ENCODE measurements at regions of chr12 and their contacts with region 1.

Region 1: GRCh38 chr12:104108755-104109445 is 29.1 kb downstream of the NFYB start:
- DNase-seq: peak; percentile 81

Region 2: DNA sequence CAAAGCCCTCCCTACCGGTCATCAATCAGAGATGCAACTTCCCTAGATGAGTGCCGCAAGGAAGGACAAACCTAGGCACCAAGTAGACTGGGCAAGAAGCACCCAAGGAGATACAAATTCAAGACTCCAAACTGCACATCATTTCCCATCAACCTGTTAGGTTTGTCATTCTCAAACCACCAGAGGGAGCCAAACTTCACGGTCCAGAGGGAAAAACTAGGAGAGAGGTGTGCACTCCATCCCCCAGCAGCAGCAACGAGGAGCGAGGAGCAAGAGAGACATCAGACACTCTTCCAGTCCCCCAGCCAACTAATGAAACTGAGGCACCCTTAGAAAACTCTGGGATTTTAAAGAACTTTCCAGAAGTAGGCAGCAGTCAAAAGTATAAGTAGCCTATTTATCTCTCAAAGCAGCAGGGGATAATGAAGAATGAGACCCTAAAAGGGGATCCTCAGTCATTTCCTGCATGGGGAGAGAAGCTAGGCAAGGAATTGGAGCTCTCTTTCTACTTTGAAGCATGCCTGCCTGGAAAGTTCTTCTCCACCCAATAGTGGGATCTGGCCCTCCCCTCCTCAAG is 230.9 kb before region 1 on chr12:
- in situ Hi-C with region 1: loop called (anchors 25 kb)
- DNase-seq: peak; percentile 75

Region 3: DNA sequence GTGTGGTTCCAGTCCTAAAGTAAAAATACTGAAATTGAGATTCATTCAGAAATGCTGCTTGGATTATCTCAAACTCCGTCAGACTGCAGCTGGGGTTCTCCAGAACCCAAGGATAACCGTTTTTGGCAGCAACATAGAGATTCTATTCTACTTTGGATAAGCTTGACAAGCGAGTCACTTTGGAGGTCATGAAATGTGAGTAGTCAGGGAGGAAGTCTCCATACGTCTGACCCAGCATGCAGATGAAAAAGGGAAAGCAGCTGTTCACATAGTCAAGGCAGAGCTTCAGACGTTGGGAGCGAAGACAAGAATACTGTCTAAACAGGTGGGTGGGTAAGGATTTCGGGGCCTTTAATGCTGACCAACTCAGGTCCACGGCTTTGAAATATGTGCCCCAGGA is 193.6 kb before region 1 on chr12:
- in situ Hi-C with region 1: no loop called
- DNase-seq: no peak

Region 4: DNA sequence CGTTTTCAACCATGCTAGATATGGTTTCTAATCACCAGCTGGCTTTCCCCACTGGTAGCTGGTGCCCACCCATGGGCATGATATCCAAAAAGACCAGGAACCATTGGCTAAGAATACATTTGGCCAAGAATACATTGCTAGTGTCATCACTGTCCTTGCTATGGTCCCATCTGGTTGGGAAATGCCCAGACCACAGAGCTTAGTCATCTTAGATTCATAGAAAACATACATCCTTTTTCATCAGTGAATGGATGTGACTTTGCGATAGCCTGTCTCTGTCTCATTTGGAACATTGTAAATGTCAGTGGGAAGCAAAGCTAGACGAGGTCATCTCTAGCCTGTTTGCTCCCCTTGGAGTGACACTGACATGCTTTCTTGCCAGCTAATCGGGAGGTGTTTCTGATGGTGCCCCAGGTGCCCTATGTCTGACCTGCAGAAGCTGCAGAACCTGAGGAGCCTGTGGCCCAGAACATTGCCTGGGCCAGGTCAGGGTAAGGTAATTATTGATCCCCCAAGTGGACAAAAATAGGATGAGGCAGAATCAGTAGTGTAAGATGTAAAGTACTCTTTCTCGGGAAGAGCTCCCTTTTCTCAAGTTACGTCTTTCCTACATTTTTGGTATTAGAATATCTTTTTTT is 654.4 kb after region 1 on chr12:
- in situ Hi-C with region 1: no loop called
- DNase-seq: no peak